ENCODE measurements at regions of chr3 and their contacts with region 1.

Region 1: GRCh38 chr3:23254835-23255234 is 51.7 kb downstream of the UBE2E2 start:
- DNase-seq: no peak
- ATAC-seq: peak; percentile 28
- H3K4me3 Mint-ChIP-seq: no peak overlapping the region
- H3K27ac Mint-ChIP-seq: no peak overlapping the region
- H3K4me1 Mint-ChIP-seq: peaks cover 59% of the 10 kb centered on the region
- H3K27me3 Mint-ChIP-seq: no peaks in the 10 kb centered on the region
- CTCF ChIP-seq: no peak

Region 2: GRCh38 chr3:23324745-23325144 is 69.9 kb after region 1 on chr3:
- CTCF ChIA-PET with region 1: no interaction called
- POLR2A ChIA-PET with region 1: interaction called, 14 read pairs
- intact Hi-C with region 1: no loop called
- DNase-seq: no peak
- ATAC-seq: peak; percentile 77
- H3K4me3 Mint-ChIP-seq: peak overlapping the region; percentile 55
- H3K27ac Mint-ChIP-seq: peak overlapping the region; percentile 46
- H3K4me1 Mint-ChIP-seq: peaks cover 60% of the 10 kb centered on the region
- H3K27me3 Mint-ChIP-seq: no peaks in the 10 kb centered on the region
- CTCF ChIP-seq: no peak